ENCODE measurements at regions of chr15 and their contacts with region 1.

Region 1: GRCh38 chr15:66946578-66947164 is 118.7 kb upstream of the SMAD3 start:
- DNase-seq: peak; percentile 76 to 81 (median 80)
- H3K4me3 ChIP-seq: no peak overlapping the region
- H3K4me3 Mint-ChIP-seq: no peak overlapping the region
- H3K27ac ChIP-seq: no peak overlapping the region
- H3K27ac Mint-ChIP-seq: no peak overlapping the region
- H3K4me1 ChIP-seq: peaks cover 16 to 17% of the 10 kb centered on the region in 2 donors
- H3K4me1 Mint-ChIP-seq: peaks cover 34% of the 10 kb centered on the region
- H3K27me3 ChIP-seq: no peaks in the 10 kb centered on the region
- H3K27me3 Mint-ChIP-seq: peaks cover 0 to 5% (median 2%) of the 10 kb centered on the region in 3 donors
- CTCF ChIP-seq: peak; percentile 91

Region 2: DNA sequence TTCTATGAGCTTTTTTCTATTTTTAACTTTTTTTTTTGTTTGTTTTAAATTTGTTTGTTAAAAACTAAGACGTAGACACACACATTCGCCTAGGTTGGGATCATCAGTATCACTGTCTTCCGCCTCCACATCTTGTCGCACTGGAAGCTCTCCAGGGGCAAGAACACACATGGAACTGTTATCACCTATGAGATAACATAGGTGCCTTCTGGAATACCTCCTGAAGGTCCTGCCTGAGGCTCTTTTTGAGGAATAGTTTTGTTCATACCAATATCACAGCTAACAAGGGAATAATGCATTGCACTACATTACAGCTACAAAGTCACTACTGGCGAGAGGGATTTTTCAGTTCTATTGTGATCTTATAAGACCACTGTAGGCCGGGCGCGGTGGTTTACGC is 411.7 kb before region 1 on chr15:
- intact Hi-C with region 1: no loop called
- DNase-seq: no peak
- H3K4me3 ChIP-seq: no peak overlapping the region
- H3K4me3 Mint-ChIP-seq: no peak overlapping the region
- H3K27ac ChIP-seq: no peak overlapping the region
- H3K27ac Mint-ChIP-seq: no peak overlapping the region
- H3K4me1 ChIP-seq: peaks cover 0 to 3% of the 10 kb centered on the region in 2 donors
- H3K4me1 Mint-ChIP-seq: peaks cover 9% of the 10 kb centered on the region
- H3K27me3 ChIP-seq: no peaks in the 10 kb centered on the region
- H3K27me3 Mint-ChIP-seq: no peaks in the 10 kb centered on the region
- CTCF ChIP-seq: no peak

Region 3: DNA sequence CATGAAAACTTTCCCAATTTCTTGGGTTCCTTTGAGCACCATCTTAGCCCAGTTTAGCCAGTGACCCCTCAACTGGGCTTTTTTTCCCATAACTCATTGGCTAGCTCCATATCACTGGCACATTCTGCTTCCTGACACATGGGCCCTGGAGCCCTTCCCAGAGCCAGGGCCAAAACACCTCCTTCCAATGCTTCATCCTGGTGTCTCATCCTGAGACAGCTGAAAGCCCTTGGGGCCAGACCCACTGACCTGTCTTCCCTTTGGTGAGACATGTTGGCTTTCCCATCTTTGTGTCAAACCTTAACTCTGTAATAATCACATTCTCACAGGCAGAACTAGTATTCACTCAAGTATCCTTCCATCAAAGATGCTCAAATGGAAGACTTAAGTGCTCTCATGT is 36.1 kb after region 1 on chr15:
- intact Hi-C with region 1: no loop called
- DNase-seq: no peak
- H3K4me3 ChIP-seq: no peak overlapping the region
- H3K4me3 Mint-ChIP-seq: no peak overlapping the region
- H3K27ac ChIP-seq: no peak overlapping the region
- H3K27ac Mint-ChIP-seq: no peak overlapping the region
- H3K4me1 ChIP-seq: no peaks in the 10 kb centered on the region
- H3K4me1 Mint-ChIP-seq: no peaks in the 10 kb centered on the region
- H3K27me3 ChIP-seq: no peaks in the 10 kb centered on the region
- H3K27me3 Mint-ChIP-seq: peaks cover 4 to 7% (median 5%) of the 10 kb centered on the region in 3 donors
- CTCF ChIP-seq: no peak

Region 4: DNA sequence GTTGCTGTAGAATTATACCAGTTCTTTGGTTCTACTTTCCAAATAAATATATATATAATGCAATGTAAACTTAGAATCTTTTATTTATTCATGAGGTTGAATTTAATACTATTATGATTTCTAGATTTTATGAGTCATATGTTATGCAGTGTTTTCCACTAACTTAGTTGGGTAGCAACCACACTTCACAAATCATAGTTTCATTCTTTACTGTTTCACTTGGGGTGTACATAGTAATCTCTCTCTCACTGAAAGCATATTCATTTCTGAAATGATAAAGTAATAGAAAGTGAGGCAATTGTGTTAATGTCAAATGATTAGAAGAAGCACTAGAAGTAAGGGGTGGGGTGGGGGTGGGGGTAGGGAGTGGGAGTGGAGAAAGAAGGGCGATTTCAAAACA is 360.5 kb after region 1 on chr15:
- intact Hi-C with region 1: loop called in 1 of 2 experiments (anchors 5 kb)
- DNase-seq: no peak
- H3K4me3 ChIP-seq: no peak overlapping the region
- H3K4me3 Mint-ChIP-seq: no peak overlapping the region
- H3K27ac ChIP-seq: no peak overlapping the region
- H3K27ac Mint-ChIP-seq: no peak overlapping the region
- H3K4me1 ChIP-seq: no peaks in the 10 kb centered on the region
- H3K4me1 Mint-ChIP-seq: no peaks in the 10 kb centered on the region
- H3K27me3 ChIP-seq: no peaks in the 10 kb centered on the region
- H3K27me3 Mint-ChIP-seq: no peaks in the 10 kb centered on the region
- CTCF ChIP-seq: no peak

Region 5: GRCh38 chr15:67433495-67434099 is 486.9 kb after region 1 on chr15:
- intact Hi-C with region 1: loop called (anchors 2 to 5 kb)
- DNase-seq: peak; percentile 20 to 49 (median 25)
- H3K4me3 ChIP-seq: no peak overlapping the region
- H3K4me3 Mint-ChIP-seq: no peak overlapping the region
- H3K27ac ChIP-seq: no peak overlapping the region
- H3K27ac Mint-ChIP-seq: no peak overlapping the region
- H3K4me1 ChIP-seq: no peaks in the 10 kb centered on the region
- H3K4me1 Mint-ChIP-seq: peaks cover 4% of the 10 kb centered on the region
- H3K27me3 ChIP-seq: no peaks in the 10 kb centered on the region
- H3K27me3 Mint-ChIP-seq: peaks cover under 1 to 4% (median 1%) of the 10 kb centered on the region in 3 donors
- CTCF ChIP-seq: peak; percentile 88

Measured in CD14-positive monocyte (primary cell).